B cell (primary cell): ENCODE measurements at regions of chr12 and their contacts with region 1.

Region 1: GRCh38 chr12:78562368-78563205 is 302.0 kb upstream of the SYT1 start:
- DNase-seq: no peak
- ATAC-seq: no peak
- H3K4me3 ChIP-seq: no peak overlapping the region
- H3K4me3 Mint-ChIP-seq: no peak overlapping the region
- H3K27ac ChIP-seq: no peak overlapping the region
- H3K27ac Mint-ChIP-seq: no peak overlapping the region
- H3K4me1 ChIP-seq: no peaks in the 10 kb centered on the region
- H3K4me1 Mint-ChIP-seq: no peaks in the 10 kb centered on the region
- H3K27me3 ChIP-seq: no peaks in the 10 kb centered on the region
- H3K27me3 Mint-ChIP-seq: no peaks in the 10 kb centered on the region
- CTCF ChIP-seq: no peak

Region 2: DNA sequence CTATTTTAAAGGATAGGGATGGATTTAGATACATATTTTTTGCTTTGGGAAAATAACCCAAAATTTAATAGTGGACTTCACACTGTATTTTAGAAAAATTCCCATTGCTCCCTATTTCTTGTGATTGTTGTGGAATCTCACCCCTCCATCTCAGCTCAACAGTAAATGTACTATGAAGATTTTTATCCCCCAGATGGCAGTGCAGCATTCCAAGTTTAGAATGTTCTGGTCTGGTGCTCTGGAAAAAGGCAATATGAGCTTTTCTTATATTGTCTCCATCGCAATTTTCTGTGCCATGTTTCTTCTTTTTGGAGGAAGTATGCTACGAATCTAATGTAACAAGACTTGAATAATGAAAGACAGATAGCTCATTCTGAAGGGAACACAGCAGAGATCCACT is 169.7 kb before region 1 on chr12:
- CTCF ChIA-PET with region 1: no interaction called
- POLR2A ChIA-PET with region 1: no interaction called
- intact Hi-C with region 1: no loop called
- DNase-seq: no peak
- ATAC-seq: no peak
- H3K4me3 ChIP-seq: no peak overlapping the region
- H3K4me3 Mint-ChIP-seq: no peak overlapping the region
- H3K27ac ChIP-seq: no peak overlapping the region
- H3K27ac Mint-ChIP-seq: no peak overlapping the region
- H3K4me1 ChIP-seq: no peaks in the 10 kb centered on the region
- H3K4me1 Mint-ChIP-seq: no peaks in the 10 kb centered on the region
- H3K27me3 ChIP-seq: no peaks in the 10 kb centered on the region
- H3K27me3 Mint-ChIP-seq: no peaks in the 10 kb centered on the region
- CTCF ChIP-seq: no peak

Region 3: GRCh38 chr12:78457938-78458337 is 104.6 kb before region 1 on chr12:
- CTCF ChIA-PET with region 1: no interaction called
- POLR2A ChIA-PET with region 1: no interaction called
- intact Hi-C with region 1: no loop called
- DNase-seq: no peak
- ATAC-seq: no peak
- H3K4me3 ChIP-seq: no peak overlapping the region
- H3K4me3 Mint-ChIP-seq: no peak overlapping the region
- H3K27ac ChIP-seq: no peak overlapping the region
- H3K27ac Mint-ChIP-seq: no peak overlapping the region
- H3K4me1 ChIP-seq: no peaks in the 10 kb centered on the region
- H3K4me1 Mint-ChIP-seq: no peaks in the 10 kb centered on the region
- H3K27me3 ChIP-seq: no peaks in the 10 kb centered on the region
- H3K27me3 Mint-ChIP-seq: no peaks in the 10 kb centered on the region
- CTCF ChIP-seq: no peak

Region 4: DNA sequence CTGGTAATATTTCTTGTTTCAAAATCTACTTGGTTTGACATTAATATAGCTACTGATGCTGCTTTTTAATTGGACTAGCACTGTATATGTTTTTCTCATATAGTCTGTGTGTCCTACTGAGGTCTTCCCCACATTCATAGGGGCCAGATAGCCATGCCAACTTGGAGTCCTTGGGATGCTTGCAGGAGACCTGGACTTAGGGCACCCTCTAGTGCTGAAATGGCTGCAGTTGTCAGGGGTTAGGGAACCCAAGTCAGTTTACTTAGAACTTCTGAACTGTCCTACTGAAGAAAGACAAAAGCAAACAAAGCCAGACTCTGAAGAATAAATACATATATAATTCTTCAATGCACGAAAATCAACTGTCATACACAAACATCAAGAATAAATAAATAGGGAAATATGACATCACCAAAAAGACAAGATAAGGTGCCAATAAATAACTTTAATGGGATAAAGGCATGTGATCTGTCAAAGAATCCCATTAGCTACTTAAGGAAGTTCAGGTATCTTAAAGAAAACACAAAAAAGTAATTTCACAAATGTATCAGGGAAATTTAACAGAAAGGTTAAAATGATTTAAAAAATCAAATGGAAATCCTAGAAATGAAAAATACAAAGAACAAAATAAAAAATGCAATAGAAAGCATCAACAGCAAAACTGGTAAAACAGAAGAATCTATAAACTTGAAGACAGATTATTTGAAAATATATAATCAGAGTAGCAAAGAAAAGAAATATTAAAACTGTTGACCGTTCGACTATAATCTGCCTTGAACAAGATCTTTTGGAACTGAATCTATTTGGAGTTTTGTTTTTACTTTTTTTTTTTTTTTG is 22.3 kb after region 1 on chr12:
- CTCF ChIA-PET with region 1: no interaction called
- POLR2A ChIA-PET with region 1: no interaction called
- intact Hi-C with region 1: no loop called
- DNase-seq: no peak
- ATAC-seq: no peak
- H3K4me3 ChIP-seq: no peak overlapping the region
- H3K4me3 Mint-ChIP-seq: no peak overlapping the region
- H3K27ac ChIP-seq: no peak overlapping the region
- H3K27ac Mint-ChIP-seq: no peak overlapping the region
- H3K4me1 ChIP-seq: no peaks in the 10 kb centered on the region
- H3K4me1 Mint-ChIP-seq: no peaks in the 10 kb centered on the region
- H3K27me3 ChIP-seq: no peaks in the 10 kb centered on the region
- H3K27me3 Mint-ChIP-seq: no peaks in the 10 kb centered on the region
- CTCF ChIP-seq: no peak

Region 5: GRCh38 chr12:79006306-79006705 is 443.7 kb after region 1 on chr12:
- CTCF ChIA-PET with region 1: no interaction called
- POLR2A ChIA-PET with region 1: no interaction called
- intact Hi-C with region 1: loop called (anchors 2 kb)
- DNase-seq: peak; percentile 21
- ATAC-seq: no peak
- H3K4me3 ChIP-seq: no peak overlapping the region
- H3K4me3 Mint-ChIP-seq: no peak overlapping the region
- H3K27ac ChIP-seq: no peak overlapping the region
- H3K27ac Mint-ChIP-seq: no peak overlapping the region
- H3K4me1 ChIP-seq: no peaks in the 10 kb centered on the region
- H3K4me1 Mint-ChIP-seq: no peaks in the 10 kb centered on the region
- H3K27me3 ChIP-seq: no peaks in the 10 kb centered on the region
- H3K27me3 Mint-ChIP-seq: no peaks in the 10 kb centered on the region
- CTCF ChIP-seq: peak; percentile 20